ENCODE measurements at regions of chr12 and their contacts with region 1.

Region 1: DNA sequence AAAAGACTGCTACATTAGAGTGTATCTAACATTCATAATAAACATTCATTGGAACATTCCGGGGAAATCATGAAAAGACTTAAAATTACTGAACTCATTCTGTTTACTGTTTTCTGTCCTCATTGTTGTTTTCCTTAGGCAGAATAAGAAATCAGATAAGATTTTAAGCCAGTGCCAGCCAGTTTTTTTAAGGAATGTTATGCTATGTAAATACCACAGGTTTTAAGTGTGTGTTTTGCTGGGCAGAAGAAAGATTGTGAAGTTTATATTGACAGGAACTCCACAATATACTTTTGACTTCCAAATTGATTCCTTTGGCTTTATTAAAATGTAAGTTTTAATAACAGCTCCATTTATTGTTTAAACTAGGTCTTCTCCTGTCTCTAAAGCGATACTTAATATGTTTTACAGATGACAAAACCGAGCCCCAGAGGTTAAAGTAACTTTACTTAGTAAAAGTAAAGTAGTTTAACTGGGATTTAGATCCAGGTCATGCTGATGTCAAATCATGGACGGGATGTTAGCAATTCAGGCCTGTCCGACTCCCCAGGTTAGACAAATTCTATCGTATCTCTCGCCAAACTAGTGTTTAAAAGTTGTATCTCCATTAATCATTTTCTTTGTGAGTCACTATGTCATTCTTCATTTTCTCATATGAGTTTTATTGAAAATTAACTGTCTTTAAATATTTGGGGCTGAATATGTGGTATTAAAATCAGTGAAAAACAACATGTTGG is 1.7 kb downstream of the LARP4 start:
- DNase-seq: no peak
- H3K4me3 ChIP-seq: peak overlapping the region; percentile 71 to 95 (median 92)
- H3K27ac ChIP-seq: no peak overlapping the region
- H3K4me1 ChIP-seq: peaks cover 0 to 5% (median 2%) of the 10 kb centered on the region in 4 experiments; a peak in 3 of 7 replicates
- H3K27me3 ChIP-seq: no peaks in the 10 kb centered on the region
- CTCF ChIP-seq: no peak
- EP300 ChIP-seq: no peak
- POLR2A ChIP-seq: no peak
- RAD21 ChIP-seq: no peak

Region 2: DNA sequence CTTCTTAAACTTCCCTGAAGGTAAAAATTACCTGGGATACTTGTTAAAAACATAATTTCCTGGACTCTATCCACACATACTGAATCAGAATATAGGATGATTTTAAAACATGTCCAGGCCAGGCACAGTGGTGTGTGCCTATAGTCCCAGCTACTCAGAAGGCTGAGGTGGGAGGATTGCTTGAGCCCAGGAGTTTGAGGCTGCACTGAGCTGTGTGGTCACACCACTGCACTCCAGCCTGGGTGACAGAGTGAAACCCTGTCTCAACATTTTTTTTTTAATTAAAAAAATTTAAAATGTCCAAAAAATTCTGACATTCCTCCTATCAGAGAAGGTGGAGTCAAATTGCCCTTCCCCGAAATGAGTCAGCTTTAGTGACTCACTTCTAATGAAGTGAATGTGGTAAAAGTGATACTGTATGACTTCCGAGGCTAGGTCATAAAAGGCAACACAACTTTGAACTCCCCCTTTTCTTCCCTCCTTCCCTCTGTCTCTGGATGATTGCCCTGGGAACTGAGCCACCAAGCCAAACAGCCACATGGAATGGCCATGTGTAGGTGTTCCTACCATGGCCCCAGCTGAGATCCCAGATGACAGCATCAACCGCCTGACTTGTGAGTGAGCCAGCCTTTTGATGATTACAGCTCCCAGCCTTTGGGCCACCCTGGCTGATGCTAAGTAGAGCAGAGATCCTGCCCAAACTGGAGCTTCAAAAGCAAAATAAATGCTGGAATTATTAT is 155.4 kb before region 1 on chr12:
- CTCF ChIA-PET with region 1: no interaction called
- POLR2A ChIA-PET with region 1: no interaction called
- DNase-seq: no peak
- H3K4me3 ChIP-seq: no peak overlapping the region
- H3K27ac ChIP-seq: no peak overlapping the region
- H3K4me1 ChIP-seq: no peaks in the 10 kb centered on the region
- H3K27me3 ChIP-seq: no peaks in the 10 kb centered on the region
- CTCF ChIP-seq: no peak
- EP300 ChIP-seq: no peak
- POLR2A ChIP-seq: no peak
- RAD21 ChIP-seq: no peak

Region 3: DNA sequence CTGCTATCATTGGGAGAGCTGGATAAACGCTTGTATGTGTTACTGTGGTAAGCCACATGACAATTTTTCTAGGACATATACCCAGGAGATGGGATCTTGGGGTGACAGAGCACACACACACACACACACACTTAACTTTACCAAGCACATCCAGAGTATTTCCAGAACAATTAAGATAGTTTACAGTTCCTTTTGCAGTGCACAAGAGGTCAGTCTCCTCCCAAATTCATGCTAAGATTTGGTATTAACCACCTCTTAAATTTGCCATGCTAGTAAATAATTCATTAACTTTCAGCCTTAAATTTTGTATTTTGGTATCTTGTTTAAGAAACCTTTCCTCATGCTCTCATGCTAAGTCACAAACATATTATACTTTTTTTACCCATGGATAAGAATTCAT is 85.2 kb before region 1 on chr12:
- CTCF ChIA-PET with region 1: no interaction called
- POLR2A ChIA-PET with region 1: no interaction called
- DNase-seq: no peak
- H3K4me3 ChIP-seq: no peak overlapping the region
- H3K27ac ChIP-seq: no peak overlapping the region
- H3K4me1 ChIP-seq: no peaks in the 10 kb centered on the region
- H3K27me3 ChIP-seq: no peaks in the 10 kb centered on the region
- CTCF ChIP-seq: no peak
- EP300 ChIP-seq: no peak
- POLR2A ChIP-seq: no peak
- RAD21 ChIP-seq: peak in 1 of 2 experiments; percentile 6; a peak in 1 of 4 replicates

Region 4: DNA sequence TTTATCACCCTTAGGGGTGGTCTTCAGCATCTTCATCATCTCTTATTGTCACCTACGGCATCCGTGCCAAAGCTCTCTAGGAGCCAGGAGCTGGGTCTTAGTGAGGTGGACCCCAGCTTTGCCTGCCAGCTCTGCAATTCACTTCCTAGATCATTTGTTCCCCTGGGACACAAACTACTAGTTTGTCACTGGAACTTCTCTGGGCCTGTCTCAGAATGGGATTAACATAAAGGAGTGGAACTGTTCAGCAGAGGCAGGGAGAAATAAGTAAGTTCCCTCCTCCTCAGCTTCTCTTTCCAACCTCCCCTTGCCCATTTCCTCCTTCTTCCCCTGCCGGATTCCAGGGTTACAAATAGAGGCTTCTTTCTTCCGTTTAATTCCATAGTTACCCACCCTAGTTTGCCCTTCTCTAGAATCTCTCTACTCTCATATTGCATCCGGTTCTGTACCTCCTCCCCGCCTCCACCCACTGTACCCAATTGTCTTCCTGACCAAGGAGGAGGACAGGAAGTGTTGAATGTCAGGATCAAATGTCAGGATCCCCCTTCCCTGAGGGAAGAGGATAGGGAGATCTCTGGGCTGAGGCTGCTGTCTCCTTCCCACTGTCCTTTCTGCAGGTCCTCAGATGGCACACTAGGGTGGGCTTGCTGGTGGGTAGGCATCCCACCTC is 23.3 kb after region 1 on chr12:
- CTCF ChIA-PET with region 1: no interaction called
- POLR2A ChIA-PET with region 1: interaction called, 10 read pairs
- DNase-seq: no peak
- H3K4me3 ChIP-seq: peak overlapping the region in 1 of 4 experiments; percentile 4; a peak in 1 of 8 replicates
- H3K27ac ChIP-seq: no peak overlapping the region
- H3K4me1 ChIP-seq: peaks cover 0 to 5% (median 3%) of the 10 kb centered on the region in 4 experiments; a peak in 6 of 7 replicates
- H3K27me3 ChIP-seq: no peaks in the 10 kb centered on the region
- CTCF ChIP-seq: no peak
- EP300 ChIP-seq: no peak
- POLR2A ChIP-seq: no peak
- RAD21 ChIP-seq: no peak

Measured in H1 (cell line).